ENCODE measurements at regions of chr6 and their contacts with region 1.

Region 1: GRCh38 chr6:24283043-24283985 is 74.5 kb downstream of the DCDC2 start:
- DNase-seq: peak; percentile 79
- H3K27ac ChIP-seq: no peak overlapping the region
- CTCF ChIP-seq: peak; percentile 68

Region 2: DNA sequence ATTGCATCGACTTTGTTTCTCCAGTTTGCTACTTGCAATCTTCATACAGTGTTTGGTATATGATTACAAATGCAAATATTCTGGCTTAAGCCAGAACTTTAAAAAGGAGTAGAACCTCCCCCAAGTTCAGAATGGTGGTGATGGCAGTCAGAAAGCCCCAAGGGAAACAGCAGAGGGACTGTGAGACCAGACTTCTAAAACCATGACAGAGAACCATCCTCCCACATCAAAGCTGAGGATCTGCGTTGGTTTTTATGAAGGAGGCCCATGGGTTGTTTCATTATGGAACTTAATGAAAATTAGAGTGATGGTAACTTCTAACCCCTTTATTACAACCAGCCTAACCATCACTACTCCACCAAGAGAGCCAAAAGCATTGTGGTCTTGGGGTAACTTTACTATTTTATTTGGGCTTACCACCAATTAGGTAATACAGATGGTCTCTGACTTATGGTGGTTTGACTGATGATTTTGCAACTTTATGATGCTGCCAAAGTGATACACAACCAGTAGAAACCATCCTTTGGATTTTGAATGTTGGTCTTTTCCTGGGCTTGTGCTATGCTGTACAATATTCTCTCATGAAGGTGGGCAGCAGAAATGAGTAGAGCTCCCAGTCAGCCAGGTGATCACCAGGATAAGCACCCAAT is 108.6 kb after region 1 on chr6:
- CTCF ChIA-PET with region 1: interaction called, 19 read pairs
- POLR2A ChIA-PET with region 1: no interaction called
- DNase-seq: no peak
- H3K27ac ChIP-seq: no peak overlapping the region
- CTCF ChIP-seq: no peak